Endothelial cell of umbilical vein (primary cell): ENCODE measurements at regions of chr5 and their contacts with region 1.

Region 1: DNA sequence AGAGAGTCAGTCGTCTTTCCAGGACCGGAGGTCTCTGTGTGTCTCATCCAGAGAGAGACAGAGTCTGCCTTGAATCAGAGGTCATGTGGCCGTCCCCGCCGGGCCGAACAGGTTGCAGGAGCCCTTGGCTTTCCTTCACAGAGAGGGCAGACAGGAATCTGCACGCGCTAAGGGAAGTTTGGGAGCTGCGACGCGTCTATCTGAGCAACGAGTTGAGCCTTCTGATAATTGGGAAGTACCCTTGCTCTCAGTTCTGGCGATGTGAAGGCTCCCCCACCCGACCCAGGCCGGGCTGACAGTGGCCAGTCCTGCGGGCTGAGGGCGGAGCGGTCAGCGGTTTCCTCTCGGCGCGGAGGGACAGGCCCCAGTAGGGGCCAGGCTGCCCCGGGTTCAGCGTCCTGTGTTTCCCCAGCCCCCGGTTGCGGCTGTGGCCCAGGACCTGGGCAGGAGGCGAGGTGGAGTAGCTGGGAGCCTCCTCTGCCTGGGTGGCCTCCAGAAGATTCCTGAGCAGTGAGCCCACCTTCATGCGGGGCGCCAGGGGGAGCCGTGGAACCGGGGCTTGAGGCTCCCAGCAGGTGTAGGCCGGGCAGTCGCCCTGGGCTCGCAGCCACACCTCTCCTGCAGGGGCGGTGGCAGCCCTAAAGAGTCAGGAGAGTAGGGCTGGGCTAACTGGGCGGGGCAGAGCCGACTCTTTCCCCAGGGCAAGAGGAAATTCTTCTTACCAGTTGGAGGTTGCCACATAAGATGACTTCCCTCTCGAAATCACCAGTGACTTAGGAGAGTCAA is 13.8 kb downstream of the NR2F1 start:
- DNase-seq: no peak
- H3K4me3 ChIP-seq: no peak overlapping the region
- H3K27ac ChIP-seq: no peak overlapping the region
- H3K4me1 ChIP-seq: no peaks in the 10 kb centered on the region
- H3K27me3 ChIP-seq: peaks cover 20 to 25% of the 10 kb centered on the region in 2 experiments
- CTCF ChIP-seq: peak in 1 of 2 donors; percentile 12
- POLR2A ChIP-seq: no peak

Region 2: DNA sequence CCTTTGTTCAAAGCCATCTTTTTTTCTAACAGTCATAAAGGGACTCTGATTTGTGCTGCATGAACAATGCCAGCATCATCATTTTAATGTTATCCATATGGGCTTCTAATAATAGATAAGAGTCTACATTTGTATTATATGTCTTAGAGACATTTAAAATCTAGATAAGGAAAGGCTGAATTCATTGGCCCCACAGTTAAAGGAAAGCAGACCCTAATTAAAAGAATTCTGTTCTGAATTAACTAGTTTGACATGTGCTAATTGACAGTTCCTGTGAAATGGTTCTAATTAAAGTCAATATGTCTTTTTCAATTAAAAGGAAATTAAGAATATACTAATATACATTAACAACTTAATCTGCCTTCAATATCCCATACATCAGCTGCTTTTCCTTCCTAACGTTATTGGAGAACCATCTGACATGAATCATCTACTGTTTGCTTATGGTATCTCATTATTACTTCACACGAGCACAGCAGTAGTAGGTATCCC is 120.6 kb before region 1 on chr5:
- CTCF ChIA-PET with region 1: no interaction called
- POLR2A ChIA-PET with region 1: no interaction called
- dilution Hi-C with region 1: no loop called
- intact Hi-C with region 1: no loop called
- DNase-seq: no peak
- H3K4me3 ChIP-seq: no peak overlapping the region
- H3K27ac ChIP-seq: no peak overlapping the region
- H3K4me1 ChIP-seq: no peaks in the 10 kb centered on the region
- H3K27me3 ChIP-seq: no peaks in the 10 kb centered on the region
- CTCF ChIP-seq: no peak
- POLR2A ChIP-seq: no peak

Region 3: GRCh38 chr5:93607367-93608258 is 10.7 kb after region 1 on chr5:
- CTCF ChIA-PET with region 1: interaction called, 13 read pairs
- POLR2A ChIA-PET with region 1: no interaction called
- dilution Hi-C with region 1: no loop called
- intact Hi-C with region 1: no loop called
- DNase-seq: peak; percentile 74
- H3K4me3 ChIP-seq: no peak overlapping the region
- H3K27ac ChIP-seq: no peak overlapping the region
- H3K4me1 ChIP-seq: peaks cover 6% of the 10 kb centered on the region
- H3K27me3 ChIP-seq: peaks cover 71 to 98% of the 10 kb centered on the region in 2 experiments
- CTCF ChIP-seq: peak; percentile 28 to 59
- POLR2A ChIP-seq: no peak